Dorsolateral prefrontal cortex (tissue), 120 donors: ENCODE measurements at regions of chr3 and their contacts with region 1.

Region 1: GRCh38 chr3:42749753-42750231 is 23.3 kb downstream of the CCDC13 start:
- DNase-seq: peak in 2 of 10 donors; percentile 58 to 59
- H3K4me3 ChIP-seq: no peak overlapping the region
- H3K27ac ChIP-seq: peak overlapping the region in 43 of 59 donors; percentile 5 to 100 (median 60)
- H3K27me3 ChIP-seq: no peaks in the 10 kb centered on the region
- CTCF ChIP-seq: peak in 55 of 56 donors; percentile 46 to 80 (median 68)

Region 2: DNA sequence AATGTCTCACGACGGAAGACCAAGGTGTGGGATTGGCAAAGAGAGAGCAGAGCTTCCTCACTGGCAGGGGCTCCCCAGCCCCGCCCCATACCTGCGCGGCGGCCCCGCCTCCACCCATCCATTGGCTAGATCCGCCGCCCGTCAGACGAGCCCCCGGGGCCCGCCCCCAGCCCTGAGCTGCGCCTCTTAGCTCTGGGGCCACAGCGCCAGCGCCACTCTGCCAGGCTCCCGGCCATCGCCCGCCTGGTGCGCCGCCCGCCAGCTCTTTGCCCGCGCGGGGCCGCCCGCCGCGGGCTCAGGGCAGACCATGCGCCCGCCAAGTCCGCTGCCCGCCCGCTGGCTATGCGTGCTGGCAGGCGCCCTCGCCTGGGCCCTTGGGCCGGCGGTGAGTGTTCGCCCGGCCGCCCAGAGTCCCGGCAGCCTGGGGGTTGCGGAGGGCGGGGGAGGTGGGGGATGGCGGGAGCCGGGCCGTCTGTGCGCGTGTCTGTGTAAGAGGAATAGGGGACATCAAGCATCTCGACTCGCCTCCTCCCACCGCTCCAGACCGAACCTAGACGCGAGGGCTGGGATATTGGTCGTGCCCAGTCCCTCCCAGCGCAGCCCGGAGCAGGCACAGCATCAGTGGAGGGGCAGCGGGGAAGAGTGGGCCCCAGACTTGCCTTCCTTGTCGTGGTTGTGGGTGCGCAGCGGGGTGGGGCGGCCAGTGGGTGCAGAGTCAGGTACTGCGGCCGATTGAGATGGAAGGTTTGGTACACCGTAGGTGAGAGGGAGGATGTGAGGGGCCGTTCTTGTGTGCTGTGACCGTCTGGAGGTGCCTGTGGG is 247.2 kb before region 1 on chr3 and contains the start of gene VIPR1:
- intact Hi-C with region 1: loop called in 1 of 2 experiments (anchors 5 kb)
- DNase-seq: peak; percentile 67 to 97 (median 87)
- H3K4me3 ChIP-seq: peak within 1 kb of the TSS; percentile 45 to 80 (median 61)
- H3K27ac ChIP-seq: peak within 1 kb of the TSS in 49 of 59 donors; percentile 18 to 83 (median 63)
- H3K27me3 ChIP-seq: peaks cover 0 to 9% (median 0%) of the 10 kb centered on the region in 45 donors
- CTCF ChIP-seq: peak in 9 of 56 donors; percentile 7 to 31 (median 11)
- total RNA-seq, gene VIPR1: 15.9 to 69.4 (median 40.2) TPM

Region 3: DNA sequence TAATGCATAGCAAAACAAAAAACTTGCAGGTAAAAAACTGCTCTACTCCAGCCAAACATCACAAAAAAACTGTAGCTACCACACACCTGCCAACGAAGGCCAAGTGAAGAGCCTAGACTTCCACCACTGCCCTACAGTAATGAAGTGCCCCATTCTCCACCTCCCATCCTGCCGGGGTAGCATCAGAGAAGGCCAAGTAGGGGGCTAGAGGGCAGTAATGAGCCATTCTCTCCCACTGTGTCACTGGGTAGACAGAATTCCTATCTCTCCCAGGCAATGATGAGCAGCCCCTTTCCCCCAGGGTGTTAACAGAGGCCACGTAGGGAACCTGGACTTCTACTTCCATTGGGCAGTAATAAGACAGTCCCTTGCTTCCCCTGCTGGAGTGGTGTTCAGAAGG is 177.5 kb before region 1 on chr3:
- intact Hi-C with region 1: loop called in 1 of 2 experiments (anchors 2 kb)
- DNase-seq: peak in 2 of 10 donors; percentile 51 to 59
- H3K4me3 ChIP-seq: no peak overlapping the region
- H3K27ac ChIP-seq: peak overlapping the region in 6 of 59 donors; percentile 2 to 42 (median 12)
- H3K27me3 ChIP-seq: no peaks in the 10 kb centered on the region
- CTCF ChIP-seq: peak in 52 of 56 donors; percentile 7 to 68 (median 46)

Region 4: GRCh38 chr3:42600111-42600988 is 149.4 kb before region 1 on chr3 and contains the start of gene NKTR:
- intact Hi-C with region 1: loop called (anchors 1 to 2 kb)
- DNase-seq: peak; percentile 87 to 97 (median 94)
- H3K4me3 ChIP-seq: peak within 1 kb of the TSS; percentile 67 to 97 (median 88)
- H3K27ac ChIP-seq: peak within 1 kb of the TSS; percentile 68 to 99 (median 96)
- H3K27me3 ChIP-seq: no peaks in the 10 kb centered on the region
- CTCF ChIP-seq: peak in 44 of 56 donors; percentile 2 to 58 (median 35)
- total RNA-seq, gene NKTR: 64.0 to 154 (median 107) TPM